ENCODE measurements at regions of chr17 and their contacts with region 1.

Region 1: GRCh38 chr17:31900877-31901276 is 631 bp downstream of the UTP6 start:
- DNase-seq: no peak
- ATAC-seq: peak; percentile 14
- H3K4me3 ChIP-seq: peak overlapping the region; percentile 90 to 92
- H3K27ac ChIP-seq: peak overlapping the region; percentile 54
- H3K4me1 ChIP-seq: peaks cover 0 to 8% of the 10 kb centered on the region in 2 experiments; a peak in 2 of 4 replicates
- H3K27me3 ChIP-seq: no peaks in the 10 kb centered on the region
- CTCF ChIP-seq: no peak
- POLR2A ChIP-seq: no peak
- RAD21 ChIP-seq: no peak

Region 2: GRCh38 chr17:31286587-31286986 is 614.3 kb before region 1 on chr17:
- CTCF ChIA-PET with region 1: no interaction called
- POLR2A ChIA-PET with region 1: no interaction called
- RAD21 ChIA-PET with region 1: no interaction called
- intact Hi-C with region 1: no loop called
- DNase-seq: no peak
- ATAC-seq: no peak
- H3K4me3 ChIP-seq: no peak overlapping the region
- H3K27ac ChIP-seq: no peak overlapping the region
- H3K4me1 ChIP-seq: no peaks in the 10 kb centered on the region
- H3K27me3 ChIP-seq: no peaks in the 10 kb centered on the region
- CTCF ChIP-seq: no peak; a peak in 1 of 6 replicates
- POLR2A ChIP-seq: no peak
- RAD21 ChIP-seq: no peak

Region 3: GRCh38 chr17:31558748-31559644 is 341.9 kb before region 1 on chr17:
- CTCF ChIA-PET with region 1: no interaction called
- POLR2A ChIA-PET with region 1: no interaction called
- RAD21 ChIA-PET with region 1: no interaction called
- intact Hi-C with region 1: loop called (anchors 5 kb)
- DNase-seq: peak; percentile 42
- ATAC-seq: peak; percentile 96
- H3K4me3 ChIP-seq: peak overlapping the region; percentile 37 to 53
- H3K27ac ChIP-seq: peak overlapping the region; percentile 64; the same call in 1 of the 2 replicates
- H3K4me1 ChIP-seq: peaks cover 0 to 8% of the 10 kb centered on the region in 2 experiments; a peak in 3 of 4 replicates
- H3K27me3 ChIP-seq: no peaks in the 10 kb centered on the region
- CTCF ChIP-seq: peak; percentile 54 to 79 (median 58)
- POLR2A ChIP-seq: no peak
- RAD21 ChIP-seq: peak; percentile 74

Measured in HCT116 (cell line).